ENCODE measurements at regions of chr5 and their contacts with region 1.

Region 1: GRCh38 chr5:80093796-80094195 is 58.6 kb downstream of the THBS4 start:
- DNase-seq: no peak
- ATAC-seq: no peak
- H3K4me3 ChIP-seq: no peak overlapping the region
- H3K4me3 Mint-ChIP-seq: no peak overlapping the region
- H3K27ac ChIP-seq: no peak overlapping the region
- H3K27ac Mint-ChIP-seq: peak overlapping the region; percentile 95
- H3K4me1 ChIP-seq: peaks cover 24% of the 10 kb centered on the region
- H3K4me1 Mint-ChIP-seq: peaks cover 37% of the 10 kb centered on the region
- H3K27me3 ChIP-seq: no peaks in the 10 kb centered on the region
- H3K27me3 Mint-ChIP-seq: no peaks in the 10 kb centered on the region
- CTCF ChIP-seq: no peak

Region 2: GRCh38 chr5:80134879-80135278 is 41.1 kb after region 1 on chr5:
- CTCF ChIA-PET with region 1: interaction called, 10 read pairs
- POLR2A ChIA-PET with region 1: interaction called, 13 read pairs
- intact Hi-C with region 1: loop called in 1 of 2 experiments (anchors 1 kb)
- DNase-seq: no peak
- ATAC-seq: no peak
- H3K4me3 ChIP-seq: no peak overlapping the region
- H3K4me3 Mint-ChIP-seq: peak overlapping the region; percentile 47
- H3K27ac ChIP-seq: peak overlapping the region; percentile 65 to 66
- H3K27ac Mint-ChIP-seq: peak overlapping the region; percentile 95
- H3K4me1 ChIP-seq: peaks cover 78% of the 10 kb centered on the region
- H3K4me1 Mint-ChIP-seq: peaks cover 95% of the 10 kb centered on the region
- H3K27me3 ChIP-seq: no peaks in the 10 kb centered on the region
- H3K27me3 Mint-ChIP-seq: no peaks in the 10 kb centered on the region
- CTCF ChIP-seq: no peak

Region 3: GRCh38 chr5:80153586-80154126 is 59.9 kb after region 1 on chr5:
- CTCF ChIA-PET with region 1: no interaction called
- POLR2A ChIA-PET with region 1: interaction called, 5 read pairs
- intact Hi-C with region 1: loop called (anchors 2 to 5 kb)
- DNase-seq: peak in 11 of 14 experiments; percentile 19 to 67 (median 48)
- ATAC-seq: peak; percentile 69
- H3K4me3 ChIP-seq: no peak overlapping the region
- H3K4me3 Mint-ChIP-seq: peak overlapping the region; percentile 73
- H3K27ac ChIP-seq: peak overlapping the region; percentile 48 to 56
- H3K27ac Mint-ChIP-seq: peak overlapping the region; percentile 98
- H3K4me1 ChIP-seq: peaks cover 51% of the 10 kb centered on the region
- H3K4me1 Mint-ChIP-seq: peaks cover 86% of the 10 kb centered on the region
- H3K27me3 ChIP-seq: no peaks in the 10 kb centered on the region
- H3K27me3 Mint-ChIP-seq: no peaks in the 10 kb centered on the region
- CTCF ChIP-seq: no peak

Region 4: DNA sequence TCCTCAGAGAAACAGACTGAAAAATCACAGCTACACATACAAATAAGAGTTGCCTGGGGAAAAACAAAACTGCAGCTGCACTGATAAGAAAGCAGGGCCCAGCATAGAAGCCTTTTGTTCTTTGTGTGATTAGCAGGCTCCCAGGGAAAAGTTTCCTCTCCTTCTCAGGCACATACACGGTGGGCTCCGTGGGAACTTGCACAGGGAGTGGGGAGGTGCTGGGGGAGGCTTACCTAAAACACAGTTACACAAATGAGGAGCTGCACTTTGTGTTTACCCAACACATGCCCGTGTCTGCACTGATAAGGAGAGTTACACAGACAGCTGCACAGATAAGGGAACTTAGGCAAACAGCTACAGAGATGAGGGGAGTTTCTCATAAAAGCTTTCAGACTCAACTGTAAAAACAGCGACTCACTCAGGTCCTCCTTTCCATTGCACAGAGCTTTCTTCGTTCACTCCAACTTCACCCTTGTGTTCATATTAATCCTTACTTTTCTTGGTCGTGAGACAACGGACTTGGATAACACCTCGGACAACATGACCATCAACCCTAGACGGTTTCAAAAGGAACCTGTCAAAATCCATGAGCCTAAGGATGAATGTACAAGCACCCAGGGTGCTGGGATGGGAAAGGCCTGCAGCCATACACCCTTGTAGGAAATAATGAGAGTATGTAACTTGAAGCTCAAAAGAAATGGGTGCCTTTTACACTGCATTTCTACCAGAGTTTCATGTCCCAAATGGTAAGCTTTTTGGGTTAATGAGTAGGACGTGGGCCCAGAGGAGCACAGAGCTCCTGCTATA is 111.2 kb after region 1 on chr5:
- CTCF ChIA-PET with region 1: interaction called, 3 read pairs
- POLR2A ChIA-PET with region 1: interaction called, 6 read pairs
- intact Hi-C with region 1: loop called in 1 of 2 experiments (anchors 1 kb)
- DNase-seq: peak in 2 of 14 experiments; percentile 51 to 63
- ATAC-seq: peak; percentile 87
- H3K4me3 ChIP-seq: no peak overlapping the region
- H3K4me3 Mint-ChIP-seq: peak overlapping the region; percentile 65
- H3K27ac ChIP-seq: peak overlapping the region; percentile 47 to 61
- H3K27ac Mint-ChIP-seq: peak overlapping the region; percentile 80
- H3K4me1 ChIP-seq: peaks cover 64% of the 10 kb centered on the region
- H3K4me1 Mint-ChIP-seq: peaks cover 92% of the 10 kb centered on the region
- H3K27me3 ChIP-seq: no peaks in the 10 kb centered on the region
- H3K27me3 Mint-ChIP-seq: no peaks in the 10 kb centered on the region
- CTCF ChIP-seq: no peak

Region 5: GRCh38 chr5:80275347-80275746 is 181.6 kb after region 1 on chr5:
- CTCF ChIA-PET with region 1: interaction called, 9 read pairs
- POLR2A ChIA-PET with region 1: interaction called, 7 read pairs
- intact Hi-C with region 1: loop called (anchors 1 kb)
- DNase-seq: peak in 5 of 14 experiments; percentile 16 to 68 (median 50)
- ATAC-seq: peak; percentile 70
- H3K4me3 ChIP-seq: no peak overlapping the region
- H3K4me3 Mint-ChIP-seq: no peak overlapping the region
- H3K27ac ChIP-seq: no peak overlapping the region
- H3K27ac Mint-ChIP-seq: peak overlapping the region; percentile 4
- H3K4me1 ChIP-seq: peaks cover 28% of the 10 kb centered on the region
- H3K4me1 Mint-ChIP-seq: peaks cover 27% of the 10 kb centered on the region
- H3K27me3 ChIP-seq: no peaks in the 10 kb centered on the region
- H3K27me3 Mint-ChIP-seq: no peaks in the 10 kb centered on the region
- CTCF ChIP-seq: peak; percentile 67

Region 6: GRCh38 chr5:80348171-80348570 is 254.4 kb after region 1 on chr5:
- CTCF ChIA-PET with region 1: no interaction called
- POLR2A ChIA-PET with region 1: no interaction called
- intact Hi-C with region 1: no loop called
- DNase-seq: no peak
- ATAC-seq: no peak
- H3K4me3 ChIP-seq: no peak overlapping the region
- H3K4me3 Mint-ChIP-seq: no peak overlapping the region
- H3K27ac ChIP-seq: no peak overlapping the region
- H3K27ac Mint-ChIP-seq: no peak overlapping the region
- H3K4me1 ChIP-seq: no peaks in the 10 kb centered on the region
- H3K4me1 Mint-ChIP-seq: peaks cover 5% of the 10 kb centered on the region
- H3K27me3 ChIP-seq: no peaks in the 10 kb centered on the region
- H3K27me3 Mint-ChIP-seq: no peaks in the 10 kb centered on the region
- CTCF ChIP-seq: no peak

Region 7: DNA sequence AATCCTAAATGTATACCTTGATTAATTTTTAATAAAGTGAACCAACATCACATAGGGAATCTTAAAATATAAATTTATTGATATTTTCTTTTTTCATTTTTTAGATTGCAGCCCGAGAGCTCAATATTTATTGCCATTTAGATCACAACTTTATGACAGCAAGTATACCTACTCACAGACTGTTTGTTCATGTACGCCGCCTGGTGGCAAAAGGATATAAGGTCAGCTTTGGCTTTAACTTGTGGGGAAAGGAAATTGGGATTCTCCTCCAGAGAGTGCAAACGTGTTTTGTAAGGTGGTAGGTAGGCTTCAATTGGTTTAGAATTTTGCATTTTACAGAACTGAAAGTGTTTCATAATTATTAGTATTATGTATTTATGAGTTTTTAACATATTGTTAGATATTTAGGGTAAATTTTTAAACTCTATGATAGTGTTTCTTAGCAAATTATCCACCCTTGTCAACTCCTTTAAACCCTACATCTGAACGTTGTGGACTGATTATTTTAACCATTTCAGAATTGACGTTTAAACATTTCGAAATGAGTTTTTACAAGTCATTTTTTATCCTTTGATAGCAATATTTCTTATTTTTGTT is 578.4 kb after region 1 on chr5:
- CTCF ChIA-PET with region 1: no interaction called
- POLR2A ChIA-PET with region 1: no interaction called
- intact Hi-C with region 1: loop called in 1 of 2 experiments (anchors 5 kb)
- DNase-seq: peak; percentile 33 to 79 (median 56)
- ATAC-seq: peak; percentile 85
- H3K4me3 ChIP-seq: no peak overlapping the region
- H3K4me3 Mint-ChIP-seq: no peak overlapping the region
- H3K27ac ChIP-seq: no peak overlapping the region
- H3K27ac Mint-ChIP-seq: no peak overlapping the region
- H3K4me1 ChIP-seq: peaks cover 7% of the 10 kb centered on the region
- H3K4me1 Mint-ChIP-seq: peaks cover 9% of the 10 kb centered on the region
- H3K27me3 ChIP-seq: no peaks in the 10 kb centered on the region
- H3K27me3 Mint-ChIP-seq: no peaks in the 10 kb centered on the region
- CTCF ChIP-seq: peak; percentile 86

Measured in CD4-positive, alpha-beta T cell (primary cell).